Mammary epithelial cell (primary cell): ENCODE measurements at regions of chr22 and their contacts with region 1.

Region 1: DNA sequence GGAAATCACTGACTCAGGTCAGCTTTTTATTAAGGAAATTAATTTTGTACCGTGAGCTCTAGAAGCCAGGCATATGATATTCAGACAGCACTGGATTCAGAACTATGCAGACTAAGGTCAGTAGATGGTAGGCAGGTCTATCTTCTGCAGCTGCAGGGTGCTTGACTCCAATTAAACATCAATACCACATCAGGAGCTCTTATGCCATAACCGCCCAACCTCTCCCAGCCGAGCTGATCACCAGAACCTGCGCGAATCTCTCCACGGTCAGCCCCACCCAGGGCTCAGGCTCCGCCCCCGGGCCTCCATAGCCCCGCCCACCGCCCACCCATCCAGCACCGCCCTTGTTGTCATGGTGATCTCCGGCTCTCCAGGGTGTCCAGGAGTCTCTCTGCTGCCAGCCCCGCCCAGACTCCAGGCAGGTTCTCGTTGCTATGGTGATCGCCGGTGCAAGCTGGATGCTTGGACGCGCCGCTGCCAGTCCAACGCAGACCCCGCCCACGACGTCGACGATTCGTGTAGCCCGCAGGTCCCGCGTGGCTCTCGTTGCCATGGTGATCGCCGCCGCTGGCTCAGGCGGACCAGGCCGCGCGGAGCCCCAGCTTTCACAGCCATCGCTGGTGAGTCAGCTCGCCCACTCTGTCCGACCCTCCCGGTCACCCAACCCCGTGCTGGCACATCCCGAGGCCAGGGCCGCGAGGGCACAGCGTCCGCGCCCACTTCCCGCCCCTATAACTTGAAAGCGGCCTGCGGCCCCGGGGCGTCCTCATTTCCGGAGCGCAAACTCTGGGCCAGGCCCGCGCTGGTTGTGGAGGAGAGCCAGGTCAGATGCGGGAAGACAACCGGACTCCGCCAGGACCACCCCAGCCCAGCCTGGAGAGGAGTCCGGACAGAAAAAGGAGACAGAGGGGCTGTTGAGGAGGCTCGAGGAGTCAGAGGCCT is at the start of gene RAB36:
- DNase-seq: peak; percentile 99
- H3K4me3 ChIP-seq: peak within 1 kb of the TSS; percentile 54 to 64 (median 60)
- H3K27ac ChIP-seq: peak within 1 kb of the TSS; percentile 89
- H3K4me1 ChIP-seq: peaks cover 18% of the 10 kb centered on the region
- H3K27me3 ChIP-seq: no peaks in the 10 kb centered on the region
- CTCF ChIP-seq: no peak
- total RNA-seq, gene RAB36: 8.6 to 8.7 TPM

Region 2: GRCh38 chr22:23069502-23070357 is 75.5 kb before region 1 on chr22:
- CTCF ChIA-PET with region 1: no interaction called
- dilution Hi-C with region 1: no loop called
- in situ Hi-C with region 1: no loop called
- intact Hi-C with region 1: loop called (anchors 5 kb)
- DNase-seq: peak; percentile 75
- H3K4me3 ChIP-seq: peak overlapping the region; percentile 43 to 55 (median 55)
- H3K27ac ChIP-seq: no peak overlapping the region
- H3K4me1 ChIP-seq: peaks cover 10% of the 10 kb centered on the region
- H3K27me3 ChIP-seq: no peaks in the 10 kb centered on the region
- CTCF ChIP-seq: no peak

Region 3: DNA sequence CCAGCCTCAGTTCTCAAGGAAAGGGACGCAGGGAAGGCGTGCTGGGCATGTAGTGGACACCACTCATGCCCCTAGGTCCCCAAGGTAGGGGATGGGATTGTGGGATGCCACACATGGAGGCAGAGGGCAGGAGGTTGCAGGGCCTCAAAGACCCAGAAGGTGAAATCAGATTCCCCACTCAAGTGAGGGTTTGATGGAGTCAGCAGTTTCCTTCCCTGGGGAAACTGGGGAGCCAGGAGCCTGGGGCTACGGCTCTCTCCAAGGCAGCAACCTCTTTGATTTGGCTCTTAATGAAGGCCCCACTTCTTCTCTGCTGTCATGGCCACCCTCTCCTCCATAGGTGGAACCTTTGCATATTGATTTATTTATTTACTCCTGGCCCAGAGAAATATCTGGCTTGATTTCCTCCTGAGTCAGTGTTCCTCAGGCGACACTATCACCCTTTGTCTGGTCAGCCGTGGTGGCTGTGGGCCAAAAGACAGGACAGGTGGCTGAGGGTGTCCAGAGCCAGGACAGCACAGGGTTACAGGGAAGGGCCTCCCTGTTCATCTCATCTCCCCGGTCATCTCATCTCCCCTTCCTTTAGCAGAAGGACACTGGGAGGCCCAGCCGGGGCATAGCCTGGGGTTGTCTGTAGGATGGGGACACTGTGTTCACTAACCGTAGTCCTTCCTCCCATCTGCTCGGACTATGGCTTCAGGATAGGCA is 65.2 kb before region 1 on chr22:
- CTCF ChIA-PET with region 1: no interaction called
- dilution Hi-C with region 1: no loop called
- in situ Hi-C with region 1: no loop called
- intact Hi-C with region 1: no loop called
- DNase-seq: no peak
- H3K4me3 ChIP-seq: no peak overlapping the region
- H3K27ac ChIP-seq: no peak overlapping the region
- H3K4me1 ChIP-seq: no peaks in the 10 kb centered on the region
- H3K27me3 ChIP-seq: no peaks in the 10 kb centered on the region
- CTCF ChIP-seq: no peak

Region 4: DNA sequence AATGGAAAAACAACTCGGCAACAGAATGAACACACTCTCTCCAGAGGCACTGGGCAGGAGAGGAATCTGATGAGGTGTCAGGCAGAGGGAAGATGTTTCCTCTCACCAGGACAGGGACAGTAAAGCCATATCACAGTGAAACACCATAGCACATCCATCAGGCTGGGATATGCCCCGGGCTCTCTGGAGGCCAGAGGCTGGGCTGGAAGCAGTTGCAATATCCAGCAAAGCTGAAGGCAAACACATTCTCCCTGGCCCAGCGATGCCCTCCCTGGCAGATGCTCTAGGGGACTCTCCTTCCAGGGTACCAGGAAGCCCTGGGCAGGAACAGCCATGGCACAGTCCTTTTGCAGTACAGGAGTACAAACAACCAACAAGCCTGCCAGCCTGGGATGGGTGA is 14.5 kb before region 1 on chr22:
- CTCF ChIA-PET with region 1: no interaction called
- dilution Hi-C with region 1: no loop called
- in situ Hi-C with region 1: no loop called
- intact Hi-C with region 1: no loop called
- DNase-seq: no peak
- H3K4me3 ChIP-seq: no peak overlapping the region
- H3K27ac ChIP-seq: no peak overlapping the region
- H3K4me1 ChIP-seq: no peaks in the 10 kb centered on the region
- H3K27me3 ChIP-seq: no peaks in the 10 kb centered on the region
- CTCF ChIP-seq: no peak

Region 5: GRCh38 chr22:23800297-23801237 is 655.4 kb after region 1 on chr22:
- CTCF ChIA-PET with region 1: no interaction called
- dilution Hi-C with region 1: no loop called
- in situ Hi-C with region 1: no loop called
- intact Hi-C with region 1: loop called (anchors 5 kb)
- DNase-seq: no peak
- H3K4me3 ChIP-seq: no peak overlapping the region
- H3K27ac ChIP-seq: no peak overlapping the region
- H3K4me1 ChIP-seq: no peaks in the 10 kb centered on the region
- H3K27me3 ChIP-seq: no peaks in the 10 kb centered on the region
- CTCF ChIP-seq: no peak